K562 (cell line): ENCODE measurements at regions of chr3 and their contacts with region 1.

Region 1: DNA sequence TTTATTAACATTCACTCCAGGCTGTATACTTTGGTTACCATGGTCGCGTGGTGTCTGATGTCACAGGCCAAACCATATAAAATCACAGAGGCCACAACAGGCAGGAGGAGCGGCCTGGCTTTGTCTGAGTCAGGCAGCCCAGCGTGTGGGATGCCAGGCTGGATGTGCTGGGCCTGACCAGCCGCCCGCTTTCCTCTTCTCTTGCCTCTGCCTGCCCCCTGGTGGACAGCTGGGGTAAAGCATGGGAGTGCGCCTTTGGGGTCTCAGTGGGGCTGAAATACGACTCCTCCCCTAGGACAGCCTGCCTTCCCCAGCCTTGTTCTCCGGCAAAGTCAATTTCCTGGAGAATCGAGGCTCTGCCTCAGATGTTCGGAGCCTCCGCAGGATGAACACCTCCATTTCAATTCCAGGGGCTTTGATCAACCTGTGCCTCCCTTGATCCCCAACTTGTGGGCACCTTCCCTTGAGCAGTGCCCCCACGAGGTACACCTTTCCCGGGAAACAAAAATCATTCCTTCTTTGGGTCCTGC is 78.2 kb downstream of the CCNL1 start:
- DNase-seq: peak; percentile 80 to 87 (median 86)
- ATAC-seq: peak; percentile 95
- H3K4me3 ChIP-seq: no peak overlapping the region
- H3K27ac ChIP-seq: no peak overlapping the region
- H3K4me1 ChIP-seq: peaks cover 11 to 13% of the 10 kb centered on the region in 2 experiments; a peak in 4 of 5 replicates
- H3K27me3 ChIP-seq: no peaks in the 10 kb centered on the region
- CTCF ChIP-seq: peak; percentile 86 to 96 (median 91)
- EP300 ChIP-seq: no peak
- POLR2A ChIP-seq: no peak
- RAD21 ChIP-seq: peak; percentile 96 to 97

Region 2: DNA sequence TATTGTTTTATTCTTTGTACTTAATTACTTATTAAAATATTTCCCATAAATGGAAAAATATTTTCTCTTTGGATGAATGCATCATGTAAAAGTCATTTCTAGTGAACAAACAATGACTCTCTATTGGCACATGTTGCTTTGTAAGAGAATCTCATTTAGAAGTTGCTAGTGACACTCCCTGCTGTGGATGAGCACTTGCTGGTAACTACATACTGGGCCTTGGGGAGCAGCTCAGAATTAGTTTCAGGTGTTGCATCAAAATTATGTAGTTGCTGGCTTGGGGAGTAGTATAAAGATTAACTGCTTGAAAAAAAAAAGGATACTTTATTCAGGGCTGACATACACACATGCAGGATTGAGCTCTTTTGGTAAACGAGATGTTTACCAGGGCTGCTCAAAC is 1041.7 kb before region 1 on chr3:
- CTCF ChIA-PET with region 1: no interaction called
- POLR2A ChIA-PET with region 1: no interaction called
- in situ Hi-C with region 1: no loop called
- intact Hi-C with region 1: loop called (anchors 10 kb)
- DNase-seq: no peak
- ATAC-seq: no peak
- H3K4me3 ChIP-seq: no peak overlapping the region
- H3K27ac ChIP-seq: no peak overlapping the region
- H3K4me1 ChIP-seq: peaks cover 0 to 9% of the 10 kb centered on the region in 2 experiments; a peak in 1 of 5 replicates
- H3K27me3 ChIP-seq: peaks cover under 1 to 16% of the 10 kb centered on the region in 2 experiments; a peak in 4 of 5 replicates
- CTCF ChIP-seq: no peak
- EP300 ChIP-seq: no peak
- POLR2A ChIP-seq: no peak
- RAD21 ChIP-seq: no peak

Region 3: DNA sequence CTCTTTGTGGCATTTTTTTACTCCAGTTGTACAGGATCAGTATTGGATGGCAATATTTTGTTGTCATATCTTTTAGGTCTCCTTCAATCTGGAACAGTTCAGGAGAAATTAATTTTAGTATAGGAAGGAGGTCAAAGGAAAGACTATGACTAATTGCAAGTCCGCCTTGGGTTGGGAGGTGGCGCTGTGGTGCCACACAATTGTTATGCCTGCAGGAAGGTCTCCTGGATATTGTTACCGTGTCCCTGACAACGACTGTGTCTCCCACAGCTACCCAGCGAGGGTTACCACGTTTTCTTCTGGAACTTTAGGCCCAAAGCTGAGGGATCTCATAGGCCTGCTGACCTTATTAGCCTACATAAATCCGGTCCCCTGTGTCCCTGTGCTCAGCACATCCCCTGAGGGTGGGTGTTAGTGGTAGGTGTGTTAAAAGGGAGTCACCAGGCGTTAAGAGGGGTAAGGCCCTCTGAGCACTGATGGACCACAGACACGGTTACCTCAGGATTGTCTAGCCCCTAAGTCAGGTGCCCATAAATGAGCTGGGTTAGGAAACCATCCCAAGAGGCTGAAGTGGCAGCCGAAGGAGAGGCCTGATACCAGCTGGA is 929.8 kb before region 1 on chr3:
- CTCF ChIA-PET with region 1: interaction called, 3 read pairs
- POLR2A ChIA-PET with region 1: no interaction called
- in situ Hi-C with region 1: no loop called
- intact Hi-C with region 1: loop called (anchors 10 kb)
- DNase-seq: peak; percentile 35 to 69 (median 49)
- ATAC-seq: peak; percentile 91
- H3K4me3 ChIP-seq: no peak overlapping the region
- H3K27ac ChIP-seq: no peak overlapping the region
- H3K4me1 ChIP-seq: peaks cover 0 to 7% of the 10 kb centered on the region in 2 experiments; a peak in 2 of 5 replicates
- H3K27me3 ChIP-seq: peaks cover 2 to 4% of the 10 kb centered on the region in 2 experiments; a peak in 2 of 5 replicates
- CTCF ChIP-seq: peak; percentile 79 to 92 (median 91)
- EP300 ChIP-seq: no peak
- POLR2A ChIP-seq: no peak
- RAD21 ChIP-seq: peak; percentile 67 to 85

Region 4: GRCh38 chr3:156535162-156535627 is 546.6 kb before region 1 on chr3:
- CTCF ChIA-PET with region 1: no interaction called
- POLR2A ChIA-PET with region 1: no interaction called
- in situ Hi-C with region 1: no loop called
- intact Hi-C with region 1: loop called (anchors 5 kb)
- DNase-seq: peak in 2 of 4 experiments; percentile 44 to 65
- ATAC-seq: peak; percentile 87
- H3K4me3 ChIP-seq: no peak overlapping the region
- H3K27ac ChIP-seq: no peak overlapping the region
- H3K4me1 ChIP-seq: no peaks in the 10 kb centered on the region; a peak in 1 of 5 replicates
- H3K27me3 ChIP-seq: no peaks in the 10 kb centered on the region
- CTCF ChIP-seq: peak; percentile 22 to 48 (median 42); a peak in 4 of 6 replicates
- EP300 ChIP-seq: no peak
- POLR2A ChIP-seq: no peak
- RAD21 ChIP-seq: peak; percentile 13 to 74; a peak in 2 of 4 replicates

Region 5: GRCh38 chr3:156681002-156681401 is 400.7 kb before region 1 on chr3:
- CTCF ChIA-PET with region 1: no interaction called
- POLR2A ChIA-PET with region 1: no interaction called
- in situ Hi-C with region 1: loop called (anchors 10 kb)
- intact Hi-C with region 1: no loop called
- DNase-seq: peak in 1 of 4 experiments; percentile 53
- ATAC-seq: peak; percentile 53; the same call in 2 of the 3 replicates
- H3K4me3 ChIP-seq: no peak overlapping the region
- H3K27ac ChIP-seq: no peak overlapping the region
- H3K4me1 ChIP-seq: peaks cover 6 to 53% of the 10 kb centered on the region in 2 experiments; a peak in 3 of 5 replicates
- H3K27me3 ChIP-seq: no peaks in the 10 kb centered on the region
- CTCF ChIP-seq: no peak
- EP300 ChIP-seq: no peak
- POLR2A ChIP-seq: no peak
- RAD21 ChIP-seq: peak in 1 of 2 experiments; percentile 11; a peak in 1 of 4 replicates

Region 6: DNA sequence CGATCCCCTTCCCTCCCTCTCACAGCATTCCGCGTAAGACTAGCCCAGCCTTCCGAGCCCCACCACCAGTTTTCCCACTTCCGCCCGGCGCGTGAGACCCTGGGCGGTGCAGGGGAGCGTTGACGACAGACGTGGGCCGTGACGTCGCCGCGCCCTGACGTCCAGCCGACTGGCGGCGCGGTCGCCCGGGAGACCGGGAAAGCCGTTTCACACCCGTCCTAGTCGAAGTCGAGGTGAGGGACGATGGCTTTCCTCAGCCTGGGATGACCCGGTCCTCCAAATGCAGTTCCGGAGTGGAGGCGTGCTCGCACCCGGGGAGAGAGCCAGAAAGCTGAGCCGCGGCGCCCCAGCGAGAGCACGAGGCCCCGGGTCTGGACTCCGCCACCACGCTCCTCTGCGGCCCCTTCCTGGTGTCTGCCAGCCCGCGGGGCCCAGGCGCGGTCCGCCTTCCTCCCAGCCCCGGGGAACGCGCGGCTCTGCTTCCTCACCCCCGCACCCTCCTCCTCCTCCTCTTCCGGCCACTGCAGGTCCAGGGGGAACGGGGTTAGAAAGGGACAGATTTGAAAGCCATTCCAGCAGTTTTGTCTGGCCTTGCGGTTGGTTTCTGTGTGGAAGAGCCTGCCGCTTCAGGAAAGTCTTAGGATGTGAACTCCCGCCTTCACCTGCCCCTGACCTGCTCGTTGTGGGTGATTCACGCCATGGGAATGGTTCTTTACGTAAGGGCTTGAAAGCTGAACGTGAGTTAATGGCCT is 255.4 kb before region 1 on chr3 and contains the start of gene LEKR1:
- CTCF ChIA-PET with region 1: no interaction called
- POLR2A ChIA-PET with region 1: no interaction called
- in situ Hi-C with region 1: no loop called
- intact Hi-C with region 1: loop called (anchors 10 kb)
- DNase-seq: peak; percentile 84 to 91 (median 86)
- ATAC-seq: peak; percentile 90
- H3K4me3 ChIP-seq: peak within 1 kb of the TSS; percentile 52
- H3K27ac ChIP-seq: peak within 1 kb of the TSS; percentile 97
- H3K4me1 ChIP-seq: peaks cover 13 to 18% of the 10 kb centered on the region in 2 experiments; a peak in 4 of 5 replicates
- H3K27me3 ChIP-seq: no peaks in the 10 kb centered on the region
- CTCF ChIP-seq: no peak
- EP300 ChIP-seq: peak; percentile 9; the same call in 1 of the 2 replicates
- POLR2A ChIP-seq: peak; percentile 96
- RAD21 ChIP-seq: no peak
- polyA plus RNA-seq, gene LEKR1: 1.3 to 1.8 TPM

Region 7: GRCh38 chr3:157136647-157137387 is 55.1 kb after region 1 on chr3:
- CTCF ChIA-PET with region 1: interaction called, 3 read pairs
- POLR2A ChIA-PET with region 1: no interaction called
- in situ Hi-C with region 1: no loop called
- intact Hi-C with region 1: loop called (anchors 2 kb)
- DNase-seq: no peak
- ATAC-seq: peak; percentile 30; the same call in 2 of the 3 replicates
- H3K4me3 ChIP-seq: no peak overlapping the region
- H3K27ac ChIP-seq: no peak overlapping the region
- H3K4me1 ChIP-seq: peaks cover 8 to 16% of the 10 kb centered on the region in 2 experiments; a peak in 4 of 5 replicates
- H3K27me3 ChIP-seq: no peaks in the 10 kb centered on the region
- CTCF ChIP-seq: no peak
- EP300 ChIP-seq: no peak
- POLR2A ChIP-seq: no peak
- RAD21 ChIP-seq: peak in 1 of 2 experiments; percentile 5; a peak in 1 of 4 replicates